Activated naive CD4-positive, alpha-beta T cell treated with anti-CD3 and anti-CD28 coated beads for 36 hours (primary cell): ENCODE measurements at regions of chr7 and their contacts with region 1.

Region 1: GRCh38 chr7:130961128-130961601 is 227.2 kb upstream of the KLF14 start:
- DNase-seq: peak; percentile 92
- H3K4me3 Mint-ChIP-seq: peak overlapping the region; percentile 87
- H3K27ac Mint-ChIP-seq: peak overlapping the region; percentile 99
- H3K4me1 Mint-ChIP-seq: peaks cover 36% of the 10 kb centered on the region
- H3K27me3 Mint-ChIP-seq: no peaks in the 10 kb centered on the region

Region 2: DNA sequence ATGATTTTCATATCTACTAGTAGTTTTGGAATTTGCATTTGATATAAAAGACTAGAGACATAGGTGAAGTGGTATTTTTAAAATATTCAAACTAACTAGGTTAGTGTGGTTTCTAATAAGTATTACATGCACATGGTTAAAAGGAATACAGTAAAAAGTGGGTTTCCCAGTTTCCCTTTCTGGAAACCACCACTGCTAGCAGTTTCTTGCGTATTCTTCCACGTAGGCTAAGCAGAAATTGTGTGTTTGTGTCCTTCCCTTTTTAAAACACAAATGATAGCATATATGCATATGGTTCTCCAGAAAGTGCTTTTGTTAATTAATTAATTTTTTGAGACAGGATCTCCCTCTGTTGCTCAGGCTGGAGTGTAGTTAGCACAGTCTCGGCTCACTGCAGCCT is 1334.3 kb before region 1 on chr7:
- CTCF ChIA-PET with region 1: no interaction called
- intact Hi-C with region 1: no loop called
- DNase-seq: no peak
- H3K4me3 Mint-ChIP-seq: no peak overlapping the region
- H3K27ac Mint-ChIP-seq: no peak overlapping the region
- H3K4me1 Mint-ChIP-seq: peaks cover 42% of the 10 kb centered on the region
- H3K27me3 Mint-ChIP-seq: no peaks in the 10 kb centered on the region

Region 3: GRCh38 chr7:130421684-130422083 is 539.5 kb before region 1 on chr7:
- CTCF ChIA-PET with region 1: no interaction called
- intact Hi-C with region 1: loop called (anchors 5 kb)
- DNase-seq: peak; percentile 65
- H3K4me3 Mint-ChIP-seq: peak overlapping the region; percentile 23
- H3K27ac Mint-ChIP-seq: peak overlapping the region; percentile 78
- H3K4me1 Mint-ChIP-seq: peaks cover 74% of the 10 kb centered on the region
- H3K27me3 Mint-ChIP-seq: no peaks in the 10 kb centered on the region

Region 4: DNA sequence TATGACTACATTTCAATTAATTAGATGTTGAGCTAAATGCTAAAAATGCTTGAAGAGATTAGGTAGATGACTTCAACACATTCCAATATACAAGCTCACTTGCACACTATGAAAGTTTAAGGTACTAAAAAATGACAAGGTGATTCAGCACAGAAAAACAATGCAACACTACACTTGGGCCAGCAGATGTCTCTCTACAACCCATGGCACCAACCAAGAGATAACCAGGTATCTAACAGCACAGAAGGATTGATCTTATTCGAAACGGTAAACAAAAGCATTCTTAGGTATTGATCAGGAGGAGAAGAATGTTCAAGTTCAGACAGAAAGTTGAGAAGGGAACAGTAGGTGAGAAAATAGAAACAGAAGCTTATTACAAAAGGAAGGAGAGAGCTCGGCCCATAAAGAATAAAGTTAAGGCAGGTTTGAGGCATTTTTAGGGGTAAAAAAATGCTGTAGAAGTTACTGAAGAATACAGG is 21.0 kb after region 1 on chr7:
- CTCF ChIA-PET with region 1: interaction called, 24 read pairs
- intact Hi-C with region 1: no loop called
- DNase-seq: peak; percentile 54
- H3K4me3 Mint-ChIP-seq: no peak overlapping the region
- H3K27ac Mint-ChIP-seq: no peak overlapping the region
- H3K4me1 Mint-ChIP-seq: peaks cover 55% of the 10 kb centered on the region
- H3K27me3 Mint-ChIP-seq: no peaks in the 10 kb centered on the region

Region 5: DNA sequence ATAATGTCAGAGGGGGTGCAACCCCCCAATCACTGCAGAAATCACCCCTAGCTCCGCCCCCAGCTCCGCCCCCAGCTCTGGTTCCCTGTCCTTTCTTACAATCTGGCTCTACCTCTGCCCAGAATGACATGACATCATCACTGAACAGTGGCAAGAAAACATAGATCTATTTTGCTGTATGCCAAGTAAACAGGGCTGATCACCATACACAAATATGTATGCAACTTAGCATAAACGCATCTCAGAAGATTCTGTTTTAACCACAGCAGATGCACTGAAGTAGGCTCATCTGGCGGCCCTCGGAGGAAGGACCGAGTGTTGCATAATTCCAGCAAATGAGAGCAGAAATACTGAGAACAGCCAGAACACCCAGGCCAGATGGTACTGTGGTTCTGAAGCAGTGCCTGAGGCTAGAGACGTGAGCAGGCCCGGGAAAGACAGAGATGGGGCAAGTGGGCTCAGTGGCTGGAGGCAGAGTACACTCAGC is 66.2 kb after region 1 on chr7:
- CTCF ChIA-PET with region 1: interaction called, 3 read pairs
- intact Hi-C with region 1: loop called (anchors 1 kb)
- DNase-seq: peak; percentile 52
- H3K4me3 Mint-ChIP-seq: no peak overlapping the region
- H3K27ac Mint-ChIP-seq: peak overlapping the region; percentile 74
- H3K4me1 Mint-ChIP-seq: peaks cover 86% of the 10 kb centered on the region
- H3K27me3 Mint-ChIP-seq: no peaks in the 10 kb centered on the region

Region 6: GRCh38 chr7:131057015-131057793 is 96.0 kb after region 1 on chr7:
- CTCF ChIA-PET with region 1: no interaction called
- intact Hi-C with region 1: loop called (anchors 1 kb)
- DNase-seq: peak; percentile 43
- H3K4me3 Mint-ChIP-seq: peak overlapping the region; percentile 66
- H3K27ac Mint-ChIP-seq: peak overlapping the region; percentile 98
- H3K4me1 Mint-ChIP-seq: peaks cover 65% of the 10 kb centered on the region
- H3K27me3 Mint-ChIP-seq: no peaks in the 10 kb centered on the region

Region 7: DNA sequence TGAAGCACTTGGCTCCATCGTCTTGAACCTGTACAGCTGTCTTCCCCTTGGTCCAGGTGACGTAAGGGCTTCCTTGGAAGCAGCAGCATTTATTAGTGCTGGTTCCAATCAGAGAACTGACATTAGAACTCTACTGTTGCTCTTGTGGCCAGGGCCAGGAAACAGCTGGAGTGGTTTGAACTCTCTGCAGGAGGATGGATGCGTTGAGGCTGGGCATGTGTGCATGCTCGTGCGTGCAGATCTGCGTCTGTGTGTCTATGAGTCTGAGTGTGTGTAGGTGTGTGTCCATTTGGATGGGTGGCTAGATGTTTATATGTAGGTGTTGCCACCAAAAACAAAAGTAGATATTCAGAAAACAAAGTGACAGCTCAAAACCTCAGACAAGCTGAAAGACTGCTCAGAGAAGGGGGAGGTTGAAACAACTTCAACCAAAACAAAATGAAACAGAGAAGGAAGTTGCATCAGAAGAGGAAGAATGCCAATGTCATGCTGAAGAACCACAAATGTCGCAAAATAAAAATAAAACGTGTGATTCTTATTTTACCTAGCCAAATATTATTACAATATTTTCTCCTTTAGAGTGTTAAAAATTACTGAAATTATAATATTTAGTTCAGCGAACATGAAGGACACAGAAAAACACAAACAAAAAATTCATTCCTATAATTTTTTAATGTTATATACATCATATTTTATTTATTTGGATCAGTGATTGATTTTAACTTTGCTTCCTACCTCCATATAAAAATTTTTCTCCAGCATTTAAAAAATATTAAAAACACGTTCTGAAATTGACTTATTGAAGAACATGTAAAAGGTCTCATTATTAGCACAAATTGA is 270.4 kb after region 1 on chr7:
- CTCF ChIA-PET with region 1: interaction called, 4 read pairs
- intact Hi-C with region 1: loop called (anchors 2 kb)
- DNase-seq: peak; percentile 80
- H3K4me3 Mint-ChIP-seq: peak overlapping the region; percentile 57
- H3K27ac Mint-ChIP-seq: peak overlapping the region; percentile 86
- H3K4me1 Mint-ChIP-seq: peaks cover 45% of the 10 kb centered on the region
- H3K27me3 Mint-ChIP-seq: no peaks in the 10 kb centered on the region